ENCODE measurements at regions of chr14 and their contacts with region 1.

Region 1: DNA sequence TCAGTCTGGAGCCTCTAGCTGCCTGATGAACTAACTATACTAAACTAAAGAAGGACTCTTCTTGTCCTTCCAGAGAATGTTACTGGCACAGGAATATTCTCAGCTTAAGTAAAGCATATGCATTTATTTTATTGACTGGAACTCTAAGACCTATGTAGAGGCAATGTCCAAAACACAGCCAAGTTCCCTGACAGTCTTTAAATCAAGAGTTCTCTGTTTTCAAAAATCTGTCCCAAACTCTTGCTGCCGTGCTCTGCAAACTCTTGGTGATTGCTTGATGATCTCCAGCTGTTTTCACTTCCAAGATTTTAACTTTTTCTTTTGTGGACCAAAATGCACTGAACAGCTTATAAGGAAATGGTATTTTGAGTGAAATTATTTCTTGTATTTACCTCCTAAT is 67.5 kb upstream of the DAAM1 start:
- DNase-seq: no peak
- H3K4me3 Mint-ChIP-seq: no peak overlapping the region
- H3K27ac Mint-ChIP-seq: no peak overlapping the region
- H3K4me1 Mint-ChIP-seq: peaks cover 4% of the 10 kb centered on the region
- H3K27me3 Mint-ChIP-seq: peaks cover 44% of the 10 kb centered on the region
- CTCF ChIP-seq: no peak

Region 2: GRCh38 chr14:59438195-59438647 is 317.3 kb after region 1 on chr14:
- CTCF ChIA-PET with region 1: interaction called, 60 read pairs
- POLR2A ChIA-PET with region 1: no interaction called
- intact Hi-C with region 1: no loop called
- DNase-seq: peak; percentile 76
- H3K4me3 Mint-ChIP-seq: no peak overlapping the region
- H3K27ac Mint-ChIP-seq: peak overlapping the region; percentile 57
- H3K4me1 Mint-ChIP-seq: peaks cover 15% of the 10 kb centered on the region
- H3K27me3 Mint-ChIP-seq: no peaks in the 10 kb centered on the region
- CTCF ChIP-seq: no peak

Measured in MCF 10A (cell line).